ENCODE measurements at regions of chr3 and their contacts with region 1.

Region 1: DNA sequence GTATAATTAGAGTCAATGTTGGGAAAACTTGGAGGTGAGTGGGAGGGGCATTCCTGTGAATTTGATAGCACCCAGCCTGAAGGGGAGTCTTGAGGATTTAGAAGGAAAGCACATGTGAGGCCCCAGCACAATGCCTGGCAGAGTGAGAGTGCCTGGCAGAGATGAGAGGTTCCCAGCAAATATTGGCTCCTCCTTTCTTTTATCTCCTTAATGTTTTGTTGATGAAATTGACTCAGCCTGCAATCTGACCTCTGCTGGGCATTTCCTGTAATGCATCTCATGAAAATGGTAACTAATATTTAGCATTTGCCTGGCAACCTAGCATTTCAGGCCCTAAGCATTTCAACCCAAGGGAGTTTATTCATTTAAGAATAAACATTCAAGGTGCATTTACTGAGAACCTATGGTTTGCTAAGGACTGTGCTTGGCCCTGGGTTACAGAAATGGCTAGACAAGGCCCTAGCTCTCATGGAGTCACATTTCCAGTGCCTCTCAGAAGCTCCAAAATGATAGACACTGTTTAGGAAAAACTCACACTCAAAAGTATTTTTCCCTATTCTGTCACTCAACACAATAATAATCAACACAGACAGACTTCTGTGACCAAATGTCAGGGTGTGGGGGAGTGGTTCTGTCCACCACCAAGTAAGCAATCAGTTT is 19.0 kb downstream of the PDHB start:
- DNase-seq: peak; percentile 54
- H3K4me3 Mint-ChIP-seq: no peak overlapping the region
- H3K27ac Mint-ChIP-seq: no peak overlapping the region
- H3K4me1 Mint-ChIP-seq: peaks cover 5% of the 10 kb centered on the region
- H3K27me3 Mint-ChIP-seq: no peaks in the 10 kb centered on the region

Region 2: DNA sequence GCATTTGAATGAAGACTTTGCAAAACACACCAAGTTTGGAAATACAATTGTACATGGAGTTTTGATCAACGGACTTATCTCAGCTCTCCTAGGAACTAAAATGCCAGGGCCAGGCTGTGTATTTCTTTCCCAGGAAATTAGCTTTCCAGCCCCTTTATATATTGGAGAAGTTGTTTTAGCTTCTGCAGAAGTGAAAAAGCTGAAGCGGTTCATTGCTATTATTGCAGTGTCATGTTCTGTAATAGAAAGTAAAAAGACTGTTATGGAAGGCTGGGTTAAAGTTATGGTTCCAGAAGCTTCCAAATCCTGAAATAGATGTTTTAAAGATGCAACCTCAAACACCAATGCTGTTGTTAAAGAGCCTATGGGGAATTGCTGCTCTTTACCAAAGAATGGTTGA is 96.9 kb before region 1 on chr3:
- CTCF ChIA-PET with region 1: interaction called, 14 read pairs
- POLR2A ChIA-PET with region 1: interaction called, 4 read pairs
- DNase-seq: no peak
- H3K4me3 Mint-ChIP-seq: no peak overlapping the region
- H3K27ac Mint-ChIP-seq: no peak overlapping the region
- H3K4me1 Mint-ChIP-seq: no peaks in the 10 kb centered on the region
- H3K27me3 Mint-ChIP-seq: no peaks in the 10 kb centered on the region

Region 3: GRCh38 chr3:58324391-58325390 is 90.0 kb before region 1 on chr3:
- CTCF ChIA-PET with region 1: interaction called, 14 read pairs
- POLR2A ChIA-PET with region 1: interaction called, 4 read pairs
- DNase-seq: no peak
- H3K4me3 Mint-ChIP-seq: no peak overlapping the region
- H3K27ac Mint-ChIP-seq: peak overlapping the region; percentile 51
- H3K4me1 Mint-ChIP-seq: peaks cover 29% of the 10 kb centered on the region
- H3K27me3 Mint-ChIP-seq: no peaks in the 10 kb centered on the region

Region 4: DNA sequence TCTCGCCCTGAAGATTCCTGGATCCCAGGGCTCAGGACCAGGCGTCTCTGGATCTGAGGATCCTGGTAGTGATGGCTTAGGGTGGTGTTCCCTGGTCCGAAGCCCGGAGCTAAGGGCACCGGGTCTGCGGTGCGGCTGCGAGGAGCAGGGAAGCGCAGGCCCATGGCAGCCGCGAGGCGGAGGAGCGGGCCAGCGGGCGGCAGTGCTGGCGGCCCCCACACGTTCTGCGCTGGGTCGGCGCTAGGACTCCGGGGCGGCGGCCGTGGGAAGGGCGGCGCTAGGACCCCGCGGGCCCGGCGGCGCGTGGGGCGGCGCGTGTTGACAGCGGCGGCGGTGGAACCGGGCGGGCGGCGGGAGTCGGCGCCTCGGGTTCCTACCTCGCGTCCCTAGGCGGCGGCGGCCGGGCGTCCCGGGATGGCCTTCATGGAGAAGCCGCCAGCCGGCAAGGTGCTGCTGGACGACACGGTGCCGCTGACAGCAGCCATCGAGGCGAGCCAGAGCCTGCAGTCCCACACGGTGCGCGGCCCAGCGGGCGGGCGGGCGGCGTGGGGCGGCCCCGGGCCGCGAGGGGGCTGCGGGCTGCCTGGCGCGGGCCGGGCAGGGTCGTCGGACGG is 82.0 kb before region 1 on chr3 and contains the start of gene PXK:
- CTCF ChIA-PET with region 1: interaction called, 23 read pairs
- POLR2A ChIA-PET with region 1: interaction called, 5 read pairs
- DNase-seq: peak; percentile 84
- H3K4me3 Mint-ChIP-seq: peak within 1 kb of the TSS; percentile 100
- H3K27ac Mint-ChIP-seq: peak within 1 kb of the TSS; percentile 98
- H3K4me1 Mint-ChIP-seq: peaks cover 40% of the 10 kb centered on the region
- H3K27me3 Mint-ChIP-seq: no peaks in the 10 kb centered on the region
- total RNA-seq, gene PXK: 50.7 to 51.2 TPM

Region 5: DNA sequence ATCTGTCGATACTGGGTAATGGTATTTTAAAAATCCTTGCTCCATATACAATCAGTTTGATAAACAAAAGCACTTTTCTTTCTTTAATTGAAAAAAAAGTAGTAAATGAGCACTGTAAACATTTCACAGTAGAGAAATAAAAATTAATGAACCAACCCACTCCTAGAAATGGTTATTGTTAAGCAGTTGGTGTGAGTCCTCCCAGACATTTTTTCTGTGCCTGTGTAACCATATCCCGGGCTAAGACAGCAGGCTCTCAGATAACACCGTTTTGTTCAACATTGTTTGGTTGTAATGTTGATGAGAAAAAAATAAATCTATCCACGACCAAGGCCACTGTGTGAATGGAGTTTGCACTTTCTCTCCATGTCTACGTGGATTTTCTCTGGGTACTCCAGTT is 39.4 kb before region 1 on chr3:
- CTCF ChIA-PET with region 1: no interaction called
- POLR2A ChIA-PET with region 1: no interaction called
- DNase-seq: no peak
- H3K4me3 Mint-ChIP-seq: no peak overlapping the region
- H3K27ac Mint-ChIP-seq: no peak overlapping the region
- H3K4me1 Mint-ChIP-seq: no peaks in the 10 kb centered on the region
- H3K27me3 Mint-ChIP-seq: no peaks in the 10 kb centered on the region